K562 (cell line): ENCODE measurements at regions of chr7 and their contacts with region 1.

Region 1: GRCh38 chr7:24793982-24794640 is 36.8 kb upstream of the GSDME start:
- DNase-seq: peak in 1 of 4 experiments; percentile 25
- ATAC-seq: peak; percentile 80
- H3K4me3 ChIP-seq: peak overlapping the region; percentile 35
- H3K27ac ChIP-seq: peak overlapping the region; percentile 22; the same call in 2 of the 3 replicates
- H3K4me1 ChIP-seq: peaks cover 7 to 20% of the 10 kb centered on the region in 2 experiments; a peak in 4 of 5 replicates
- H3K27me3 ChIP-seq: no peaks in the 10 kb centered on the region
- CTCF ChIP-seq: no peak
- EP300 ChIP-seq: no peak
- POLR2A ChIP-seq: peak; percentile 49
- RAD21 ChIP-seq: no peak

Region 2: DNA sequence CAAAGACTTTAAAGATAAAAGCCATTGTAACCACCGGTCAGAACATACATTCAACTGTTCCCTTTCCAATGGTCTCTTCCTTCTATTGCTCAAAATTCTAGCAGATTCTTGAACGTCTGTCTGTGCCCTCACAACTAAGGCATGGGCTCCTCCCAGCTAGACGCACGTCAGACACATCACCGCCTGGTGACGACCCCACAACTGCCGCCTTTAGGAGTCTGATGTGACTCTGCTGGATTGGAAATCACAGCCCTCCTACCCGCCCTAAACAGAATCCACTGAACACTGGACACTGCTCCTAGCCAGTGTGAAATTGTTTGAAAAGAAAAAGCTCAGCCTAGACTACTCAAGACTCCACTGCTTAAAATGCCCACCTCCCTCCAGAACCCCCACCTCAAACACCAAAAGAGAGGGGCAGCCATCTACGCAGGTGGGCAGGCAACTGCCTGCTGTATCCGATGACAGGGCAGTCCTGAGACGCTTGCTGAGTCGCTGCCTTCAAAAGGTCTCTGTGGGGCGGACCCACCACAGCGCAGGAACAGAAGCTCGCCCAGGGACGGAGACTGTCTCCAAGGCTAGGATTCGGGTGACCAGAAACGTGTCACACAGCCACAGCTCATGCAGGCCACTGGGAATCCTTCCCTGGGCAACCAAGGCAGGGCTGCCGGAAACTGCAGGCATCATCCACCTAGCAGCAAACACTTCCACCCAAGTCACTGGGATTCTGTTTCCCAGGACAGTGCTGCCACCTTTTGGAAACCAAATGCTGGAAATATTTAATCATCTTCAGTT is 71.5 kb before region 1 on chr7:
- CTCF ChIA-PET with region 1: no interaction called
- POLR2A ChIA-PET with region 1: no interaction called
- in situ Hi-C with region 1: no loop called
- intact Hi-C with region 1: loop called (anchors 10 kb)
- DNase-seq: peak in 1 of 4 experiments; percentile 36
- ATAC-seq: peak; percentile 79
- H3K4me3 ChIP-seq: no peak overlapping the region
- H3K27ac ChIP-seq: no peak overlapping the region
- H3K4me1 ChIP-seq: peaks cover 5 to 10% of the 10 kb centered on the region in 2 experiments; a peak in 4 of 5 replicates
- H3K27me3 ChIP-seq: peaks cover 0 to 7% of the 10 kb centered on the region in 2 experiments; a peak in 2 of 5 replicates
- CTCF ChIP-seq: peak; percentile 55 to 63 (median 57); a peak in 5 of 6 replicates
- EP300 ChIP-seq: no peak
- POLR2A ChIP-seq: no peak
- RAD21 ChIP-seq: peak in 1 of 2 experiments; percentile 66; a peak in 2 of 4 replicates